ENCODE measurements at regions of chr11 and their contacts with region 1.

Region 1: DNA sequence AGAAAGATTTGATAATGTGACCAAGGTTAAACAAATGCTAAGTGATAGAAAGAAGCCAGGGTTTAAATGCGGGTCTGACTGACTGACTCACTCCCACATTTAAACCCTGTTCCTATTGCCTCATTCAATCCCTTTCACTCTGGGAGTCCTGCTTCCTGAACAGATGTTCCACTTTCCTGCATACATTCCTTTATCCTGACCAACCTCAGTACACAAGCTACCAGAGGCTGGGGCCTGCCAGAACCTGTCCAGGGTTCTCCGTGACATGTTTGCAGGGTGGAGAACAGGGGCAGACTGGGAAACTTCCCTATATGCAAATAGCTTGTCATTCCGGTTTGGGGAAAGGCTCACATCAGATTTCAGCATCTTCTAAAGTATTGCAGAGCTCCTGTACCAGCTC is 3.0 kb upstream of the ANKK1 start:
- DNase-seq: peak; percentile 96
- ATAC-seq: peak; percentile 97
- H3K4me3 ChIP-seq: no peak overlapping the region
- H3K27ac ChIP-seq: no peak overlapping the region
- H3K4me1 ChIP-seq: no peaks in the 10 kb centered on the region
- H3K27me3 ChIP-seq: peaks cover 35% of the 10 kb centered on the region
- CTCF ChIP-seq: no peak
- POLR2A ChIP-seq: no peak
- RAD21 ChIP-seq: no peak

Region 2: DNA sequence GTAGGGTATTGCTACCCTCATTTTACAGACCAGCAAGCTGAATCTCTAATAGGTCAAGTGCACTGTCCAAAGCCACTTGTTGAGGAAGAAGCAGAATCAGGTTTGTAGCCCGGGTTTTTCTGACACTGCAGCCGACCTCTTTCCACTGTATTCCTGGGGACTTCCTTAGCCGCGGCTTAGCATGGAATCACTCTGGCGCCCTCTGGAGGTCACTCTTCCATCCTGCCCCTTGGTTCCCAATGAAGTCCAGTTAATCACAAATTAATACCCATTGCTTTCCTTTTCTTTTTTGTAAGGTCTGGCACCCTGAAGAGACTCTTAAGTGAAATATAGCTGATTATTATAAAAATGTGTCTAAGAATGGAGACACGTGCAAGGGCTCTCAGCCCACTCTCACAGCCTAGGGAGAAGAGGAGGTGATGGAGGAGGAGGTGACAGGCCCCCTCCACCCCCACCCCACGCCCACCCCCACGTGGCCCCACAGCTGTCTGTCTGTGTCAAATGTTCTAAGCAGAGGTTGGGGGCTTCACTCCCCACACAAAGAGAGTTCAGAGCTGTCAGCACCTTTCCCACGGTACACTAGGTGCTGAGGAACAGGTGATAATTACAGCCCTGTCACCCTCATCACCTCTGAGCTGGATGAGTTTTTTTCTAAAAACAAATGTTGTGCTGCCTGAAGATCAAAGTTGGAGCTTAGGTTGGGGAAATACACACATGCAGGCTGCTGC is 148.3 kb after region 1 on chr11:
- CTCF ChIA-PET with region 1: no interaction called
- POLR2A ChIA-PET with region 1: no interaction called
- dilution Hi-C with region 1: no loop called
- in situ Hi-C with region 1: no loop called
- intact Hi-C with region 1: loop called (anchors 5 kb)
- DNase-seq: peak; percentile 71
- ATAC-seq: peak; percentile 98
- H3K4me3 ChIP-seq: no peak overlapping the region
- H3K27ac ChIP-seq: no peak overlapping the region
- H3K4me1 ChIP-seq: no peaks in the 10 kb centered on the region
- H3K27me3 ChIP-seq: peaks cover 28% of the 10 kb centered on the region
- CTCF ChIP-seq: peak; percentile 86
- POLR2A ChIP-seq: no peak
- RAD21 ChIP-seq: peak; percentile 81